ENCODE measurements at regions of chr22 and their contacts with region 1.

Region 1: GRCh38 chr22:40276996-40277823 is 69.1 kb upstream of the ADSL start:
- DNase-seq: no peak
- H3K4me3 ChIP-seq: peak overlapping the region; percentile 44 to 57 (median 54)
- H3K27ac ChIP-seq: peak overlapping the region; percentile 85 to 90 (median 86)
- H3K4me1 ChIP-seq: peaks cover 22 to 38% (median 32%) of the 10 kb centered on the region in 4 donors
- H3K27me3 ChIP-seq: no peaks in the 10 kb centered on the region
- CTCF ChIP-seq: no peak
- EP300 ChIP-seq: no peak
- POLR2A ChIP-seq: no peak

Region 2: GRCh38 chr22:40044102-40044869 is 232.9 kb before region 1 on chr22:
- intact Hi-C with region 1: loop called (anchors 10 kb)
- DNase-seq: peak; percentile 100
- H3K4me3 ChIP-seq: peak overlapping the region; percentile 65 to 85 (median 81)
- H3K27ac ChIP-seq: peak overlapping the region; percentile 91 to 98 (median 94)
- H3K4me1 ChIP-seq: peaks cover 45 to 74% (median 64%) of the 10 kb centered on the region in 4 donors
- H3K27me3 ChIP-seq: no peaks in the 10 kb centered on the region
- CTCF ChIP-seq: peak in 1 of 3 experiments; percentile 20
- EP300 ChIP-seq: no peak
- POLR2A ChIP-seq: peak; percentile 28

Region 3: DNA sequence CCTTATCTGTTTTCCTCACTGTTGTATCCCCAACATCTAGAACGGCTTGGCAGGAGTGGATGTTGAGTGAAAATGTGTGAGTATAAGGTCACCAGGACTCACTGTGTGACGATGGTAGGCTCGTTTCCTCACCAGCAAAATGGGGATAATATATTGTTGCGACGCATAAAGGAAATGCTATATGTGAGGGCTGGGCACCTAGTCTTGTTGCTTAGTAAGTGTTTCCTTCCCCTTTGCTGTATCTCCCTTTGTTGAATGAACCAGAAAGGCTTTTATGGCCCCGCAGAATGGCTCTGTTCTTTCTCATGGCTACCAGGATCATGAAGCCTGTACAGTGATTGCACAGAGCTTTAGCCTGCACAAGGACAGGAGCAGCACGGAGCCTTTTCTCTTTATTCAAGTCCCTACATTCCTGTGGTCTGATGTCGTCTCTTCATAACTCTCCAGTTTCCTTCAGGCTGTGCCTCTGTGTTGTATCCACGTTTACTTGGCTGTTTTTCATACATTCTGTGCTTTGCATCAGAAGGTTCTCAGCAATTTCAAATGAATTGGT is 94.1 kb before region 1 on chr22:
- intact Hi-C with region 1: loop called (anchors 10 kb)
- DNase-seq: no peak
- H3K4me3 ChIP-seq: peak overlapping the region in 1 of 4 donors; percentile 8
- H3K27ac ChIP-seq: peak overlapping the region; percentile 57 to 83 (median 66)
- H3K4me1 ChIP-seq: peaks cover 58 to 86% (median 69%) of the 10 kb centered on the region in 4 donors
- H3K27me3 ChIP-seq: no peaks in the 10 kb centered on the region
- CTCF ChIP-seq: no peak
- EP300 ChIP-seq: no peak
- POLR2A ChIP-seq: no peak

Region 4: DNA sequence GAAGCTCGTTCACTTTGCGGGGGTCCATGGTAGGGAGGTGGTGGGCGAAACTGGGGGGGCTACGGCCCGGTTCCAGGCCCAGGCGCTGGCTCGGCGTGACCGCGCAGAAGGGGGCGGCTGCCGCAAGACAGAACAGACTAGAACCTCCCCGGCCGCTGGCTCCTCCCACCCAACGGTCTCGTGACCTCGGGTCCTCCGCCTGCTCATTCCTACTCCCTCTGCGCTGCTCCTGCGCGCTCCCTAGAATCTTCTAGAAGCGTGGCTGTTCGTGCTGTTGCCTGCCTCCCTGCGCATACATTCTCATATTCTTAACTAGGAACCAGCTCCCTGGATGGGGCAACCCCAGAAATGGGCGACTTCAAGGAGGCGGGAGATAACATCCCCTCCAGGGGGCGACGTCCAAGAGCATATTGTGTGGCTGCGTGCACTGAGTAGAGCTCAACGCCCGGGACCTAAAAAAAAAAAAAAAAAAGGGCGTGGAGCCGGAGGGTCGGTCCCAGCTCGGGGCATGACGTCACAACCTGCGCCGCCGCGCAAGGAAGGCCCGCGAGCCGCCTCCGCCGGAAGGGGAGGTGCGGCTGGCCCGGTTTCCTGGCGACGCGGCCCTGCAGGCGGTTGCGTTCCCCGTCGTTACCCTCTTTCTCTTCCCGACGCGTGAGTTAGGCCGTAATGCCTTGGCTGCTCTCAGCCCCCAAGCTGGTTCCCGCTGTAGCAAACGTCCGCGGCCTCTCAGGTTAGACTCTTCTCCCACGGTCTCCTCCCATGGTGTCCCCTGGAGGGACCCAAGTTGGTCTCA is 579.5 kb after region 1 on chr22 and contains the starts of genes ST13 and XPNPEP3:
- intact Hi-C with region 1: loop called (anchors 5 kb)
- DNase-seq: peak; percentile 99
- H3K4me3 ChIP-seq: peak within 1 kb of the TSS; percentile 61 to 94 (median 92)
- H3K27ac ChIP-seq: peak within 1 kb of the TSS; percentile 89 to 99 (median 97)
- H3K4me1 ChIP-seq: peaks cover 46 to 57% (median 54%) of the 10 kb centered on the region in 4 donors
- H3K27me3 ChIP-seq: no peaks in the 10 kb centered on the region
- CTCF ChIP-seq: peak in 1 of 3 experiments; percentile 6
- EP300 ChIP-seq: no peak
- POLR2A ChIP-seq: peak; percentile 63
- total RNA-seq, gene ST13: 169 to 193 (median 189) TPM
- total RNA-seq, gene XPNPEP3: 7.6 to 15.8 (median 10.2) TPM

Measured in esophagus muscularis mucosa (tissue), 4 donors.